Adrenal gland (tissue), 19 donors: ENCODE measurements at regions of chr5 and their contacts with region 1.

Region 1: DNA sequence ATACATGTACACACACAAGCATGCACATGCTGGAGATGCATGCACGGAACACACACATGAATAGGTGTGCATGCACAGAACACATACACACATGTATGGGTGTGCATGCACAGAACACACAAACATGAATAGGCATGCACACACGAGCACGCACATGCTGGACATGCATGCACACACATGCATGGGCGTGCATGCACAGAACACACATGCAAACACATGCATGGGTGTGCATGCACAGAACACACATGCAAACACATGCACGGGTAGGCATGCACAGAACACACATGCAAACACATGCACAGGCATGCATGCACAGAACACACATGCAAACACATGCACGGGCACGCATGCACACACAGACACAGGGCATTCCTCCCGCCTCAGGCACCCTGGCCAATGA is 382.3 kb downstream of the IRX2 start:
- DNase-seq: no peak
- H3K4me3 ChIP-seq: no peak overlapping the region
- H3K27ac ChIP-seq: no peak overlapping the region
- H3K4me1 ChIP-seq: no peaks in the 10 kb centered on the region
- H3K27me3 ChIP-seq: no peaks in the 10 kb centered on the region
- CTCF ChIP-seq: no peak
- POLR2A ChIP-seq: no peak

Region 2: GRCh38 chr5:2311851-2312250 is 57.3 kb before region 1 on chr5:
- intact Hi-C with region 1: no loop called
- DNase-seq: no peak
- H3K4me3 ChIP-seq: no peak overlapping the region
- H3K27ac ChIP-seq: no peak overlapping the region
- H3K4me1 ChIP-seq: no peaks in the 10 kb centered on the region
- H3K27me3 ChIP-seq: no peaks in the 10 kb centered on the region
- CTCF ChIP-seq: no peak
- POLR2A ChIP-seq: no peak

Region 3: GRCh38 chr5:2710910-2711309 is 341.7 kb after region 1 on chr5:
- intact Hi-C with region 1: no loop called
- DNase-seq: no peak
- H3K4me3 ChIP-seq: no peak overlapping the region
- H3K27ac ChIP-seq: no peak overlapping the region
- H3K4me1 ChIP-seq: no peaks in the 10 kb centered on the region
- H3K27me3 ChIP-seq: no peaks in the 10 kb centered on the region
- CTCF ChIP-seq: peak in 1 of 6 experiments; percentile 17
- POLR2A ChIP-seq: no peak

Region 4: GRCh38 chr5:2857837-2858236 is 488.7 kb after region 1 on chr5:
- intact Hi-C with region 1: loop called in 1 of 2 experiments (anchors 10 kb)
- DNase-seq: no peak
- H3K4me3 ChIP-seq: no peak overlapping the region
- H3K27ac ChIP-seq: no peak overlapping the region
- H3K4me1 ChIP-seq: no peaks in the 10 kb centered on the region
- H3K27me3 ChIP-seq: no peaks in the 10 kb centered on the region
- CTCF ChIP-seq: no peak
- POLR2A ChIP-seq: no peak